AG04449 (cell line): ENCODE measurements at regions of chr15 and their contacts with region 1.

Region 1: GRCh38 chr15:57340682-57341259 is 35.5 kb upstream of the CGNL1 start:
- DNase-seq: no peak
- H3K4me3 ChIP-seq: no peak overlapping the region
- CTCF ChIP-seq: peak; percentile 65

Region 2: GRCh38 chr15:57100136-57100539 is 240.6 kb before region 1 on chr15:
- CTCF ChIA-PET with region 1: no interaction called
- POLR2A ChIA-PET with region 1: no interaction called
- DNase-seq: no peak
- H3K4me3 ChIP-seq: no peak overlapping the region
- CTCF ChIP-seq: no peak

Region 3: GRCh38 chr15:57356636-57357035 is 15.9 kb after region 1 on chr15:
- CTCF ChIA-PET with region 1: interaction called, 119 read pairs
- POLR2A ChIA-PET with region 1: no interaction called
- DNase-seq: no peak
- H3K4me3 ChIP-seq: no peak overlapping the region
- CTCF ChIP-seq: no peak

Region 4: DNA sequence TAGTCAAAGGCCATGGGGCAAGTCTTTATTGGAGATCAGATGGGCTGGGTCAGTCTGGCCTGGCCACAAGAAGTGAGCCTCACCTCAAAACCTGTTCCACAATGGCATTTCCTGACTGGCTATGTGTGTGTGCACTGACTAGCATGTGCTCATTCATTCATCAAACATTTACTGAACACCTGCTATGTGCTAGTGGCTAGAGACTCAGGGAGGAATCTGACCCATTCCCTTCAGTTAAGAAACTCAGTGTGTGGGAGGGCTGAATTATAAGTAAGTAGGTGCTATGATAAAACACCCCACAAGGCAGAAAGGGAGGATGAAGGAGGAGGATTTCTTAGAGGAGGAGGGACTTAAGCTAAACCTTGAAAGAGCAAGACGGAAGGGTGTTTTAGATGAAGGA is 30.2 kb after region 1 on chr15:
- CTCF ChIA-PET with region 1: interaction called, 13 read pairs
- POLR2A ChIA-PET with region 1: no interaction called
- DNase-seq: no peak
- H3K4me3 ChIP-seq: no peak overlapping the region
- CTCF ChIP-seq: no peak

Region 5: DNA sequence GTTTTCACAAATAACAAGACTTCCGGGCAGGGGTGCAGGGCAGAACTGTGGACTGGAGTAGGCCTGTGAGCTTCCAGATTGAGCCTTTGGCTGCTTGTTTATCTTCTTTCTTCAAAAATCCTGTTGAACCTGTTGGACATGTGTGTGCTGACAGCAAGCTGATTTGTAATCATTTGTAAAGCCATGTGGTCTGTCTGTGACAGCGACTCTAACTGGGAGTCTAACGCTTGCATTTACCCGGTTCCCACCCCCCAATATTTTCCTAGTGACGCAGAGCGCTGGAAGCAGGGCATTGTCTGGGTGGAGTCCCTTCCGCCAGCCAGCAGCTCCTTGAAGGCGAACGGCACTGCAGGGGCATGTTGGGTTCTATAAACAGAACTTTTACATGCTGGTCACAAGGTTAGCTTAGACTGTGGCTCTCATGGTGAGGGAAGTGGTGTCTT is 165.2 kb after region 1 on chr15:
- CTCF ChIA-PET with region 1: interaction called, 23 read pairs
- POLR2A ChIA-PET with region 1: no interaction called
- DNase-seq: no peak
- H3K4me3 ChIP-seq: no peak overlapping the region
- CTCF ChIP-seq: no peak

Region 6: GRCh38 chr15:57522148-57522547 is 181.4 kb after region 1 on chr15:
- CTCF ChIA-PET with region 1: interaction called, 747 read pairs
- POLR2A ChIA-PET with region 1: interaction called, 5 read pairs
- DNase-seq: no peak
- H3K4me3 ChIP-seq: no peak overlapping the region
- CTCF ChIP-seq: no peak

Region 7: DNA sequence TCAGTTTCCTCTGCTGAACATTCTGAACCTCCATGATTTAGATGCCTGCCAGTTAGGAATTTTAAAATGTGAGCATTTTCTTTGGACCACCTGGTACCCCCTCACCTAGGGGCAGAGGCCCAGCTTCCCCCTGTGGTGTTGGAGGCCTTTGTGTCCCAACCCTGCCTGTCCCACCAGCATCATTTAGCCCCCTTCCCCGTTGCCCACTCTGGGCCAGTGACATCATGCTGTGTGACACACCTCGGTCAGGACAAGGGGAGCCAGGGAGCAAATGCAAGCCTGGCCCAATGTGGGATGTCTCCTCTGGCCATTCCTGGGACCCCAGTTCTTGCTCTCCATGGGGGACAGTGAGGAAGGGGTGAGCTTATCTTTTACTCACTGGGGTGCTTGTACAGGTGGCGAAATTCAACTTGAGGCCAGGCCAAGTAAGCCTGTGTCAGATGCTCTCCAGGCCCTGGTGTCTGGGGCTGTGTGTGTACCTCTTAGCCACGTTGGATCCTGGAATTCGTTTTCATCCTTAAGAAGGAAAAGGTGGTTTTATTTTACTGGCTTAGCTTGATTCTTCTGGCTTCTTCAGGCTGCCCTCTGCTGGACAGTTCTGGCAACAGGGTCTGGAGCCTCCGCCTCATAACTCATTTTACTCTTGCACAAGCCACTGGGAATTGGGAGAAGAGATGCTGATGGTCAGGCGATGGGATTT is 201.2 kb after region 1 on chr15:
- CTCF ChIA-PET with region 1: interaction called, 254 read pairs
- POLR2A ChIA-PET with region 1: no interaction called
- DNase-seq: no peak
- H3K4me3 ChIP-seq: no peak overlapping the region
- CTCF ChIP-seq: peak; percentile 84

Region 8: DNA sequence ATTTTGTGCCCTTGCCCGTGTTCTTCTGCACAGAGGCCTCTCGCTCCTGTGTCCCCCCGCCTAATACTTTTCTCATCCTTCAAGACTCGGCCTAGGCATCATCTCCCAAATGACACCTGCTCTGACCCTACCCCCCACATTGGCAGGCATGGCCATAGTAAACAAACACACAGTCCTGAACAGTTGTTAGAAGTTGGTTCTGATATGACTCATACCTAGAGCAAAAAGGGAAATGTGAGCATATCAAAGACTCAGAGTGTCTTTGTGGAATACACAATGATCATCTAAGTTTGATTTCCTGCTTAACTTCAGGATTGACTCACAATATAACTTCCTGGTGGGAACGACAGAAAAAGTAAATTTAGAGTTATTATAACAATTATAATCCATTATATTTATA is 486.2 kb after region 1 on chr15:
- CTCF ChIA-PET with region 1: no interaction called
- POLR2A ChIA-PET with region 1: no interaction called
- DNase-seq: no peak
- H3K4me3 ChIP-seq: no peak overlapping the region
- CTCF ChIP-seq: no peak